B cell (primary cell): ENCODE measurements at regions of chr3 and their contacts with region 1.

Region 1: DNA sequence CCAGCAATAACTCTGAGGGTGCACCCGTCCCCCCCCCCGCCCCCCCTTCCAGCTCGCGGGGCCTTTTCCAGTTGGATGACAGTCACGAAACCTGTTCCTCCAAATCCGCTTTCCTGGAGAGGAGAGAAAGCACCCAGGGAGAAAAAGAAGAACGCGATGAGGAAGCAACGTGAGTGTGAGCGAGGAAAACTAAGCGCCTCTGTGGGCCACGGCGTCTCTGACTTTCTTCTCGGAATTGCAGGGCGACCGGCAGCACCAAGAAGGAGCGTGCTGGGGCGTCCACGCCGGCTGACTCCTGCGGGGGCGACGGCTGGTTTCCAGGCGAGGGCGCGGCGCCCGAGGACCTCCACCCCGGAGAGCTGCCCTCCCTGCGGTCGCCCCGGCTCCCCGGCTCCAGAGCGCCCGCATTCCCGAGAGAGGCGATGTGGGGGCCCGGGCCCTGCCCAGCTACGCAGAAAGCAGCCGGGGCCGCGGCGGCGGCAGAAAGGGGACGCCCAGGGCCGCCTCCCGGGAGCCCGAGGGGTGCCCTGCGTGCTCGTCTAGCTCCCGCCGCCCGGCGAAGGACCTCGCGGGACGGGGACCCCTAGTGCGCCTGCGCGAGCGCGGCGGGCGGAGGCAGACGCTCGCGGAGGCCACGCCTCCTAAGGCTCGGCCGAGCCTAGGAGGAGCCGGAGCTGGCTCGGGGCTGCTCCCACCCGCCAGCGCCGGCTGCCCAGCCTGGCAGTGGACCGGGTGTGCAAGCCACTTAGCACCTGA is 15.4 kb upstream of the ADIPOQ start:
- DNase-seq: peak; percentile 92
- ATAC-seq: peak; percentile 95
- H3K4me3 ChIP-seq: peak overlapping the region in 4 of 5 experiments; percentile 57 to 78 (median 70)
- H3K4me3 Mint-ChIP-seq: peak overlapping the region; percentile 79
- H3K27ac ChIP-seq: peak overlapping the region in 1 of 2 donors; percentile 55
- H3K27ac Mint-ChIP-seq: peak overlapping the region; percentile 41
- H3K4me1 ChIP-seq: peaks cover 24 to 28% of the 10 kb centered on the region in 2 donors
- H3K4me1 Mint-ChIP-seq: peaks cover 21% of the 10 kb centered on the region
- H3K27me3 ChIP-seq: peaks cover 0 to 69% (median 42%) of the 10 kb centered on the region in 4 experiments
- H3K27me3 Mint-ChIP-seq: peaks cover 54% of the 10 kb centered on the region
- CTCF ChIP-seq: no peak

Region 2: DNA sequence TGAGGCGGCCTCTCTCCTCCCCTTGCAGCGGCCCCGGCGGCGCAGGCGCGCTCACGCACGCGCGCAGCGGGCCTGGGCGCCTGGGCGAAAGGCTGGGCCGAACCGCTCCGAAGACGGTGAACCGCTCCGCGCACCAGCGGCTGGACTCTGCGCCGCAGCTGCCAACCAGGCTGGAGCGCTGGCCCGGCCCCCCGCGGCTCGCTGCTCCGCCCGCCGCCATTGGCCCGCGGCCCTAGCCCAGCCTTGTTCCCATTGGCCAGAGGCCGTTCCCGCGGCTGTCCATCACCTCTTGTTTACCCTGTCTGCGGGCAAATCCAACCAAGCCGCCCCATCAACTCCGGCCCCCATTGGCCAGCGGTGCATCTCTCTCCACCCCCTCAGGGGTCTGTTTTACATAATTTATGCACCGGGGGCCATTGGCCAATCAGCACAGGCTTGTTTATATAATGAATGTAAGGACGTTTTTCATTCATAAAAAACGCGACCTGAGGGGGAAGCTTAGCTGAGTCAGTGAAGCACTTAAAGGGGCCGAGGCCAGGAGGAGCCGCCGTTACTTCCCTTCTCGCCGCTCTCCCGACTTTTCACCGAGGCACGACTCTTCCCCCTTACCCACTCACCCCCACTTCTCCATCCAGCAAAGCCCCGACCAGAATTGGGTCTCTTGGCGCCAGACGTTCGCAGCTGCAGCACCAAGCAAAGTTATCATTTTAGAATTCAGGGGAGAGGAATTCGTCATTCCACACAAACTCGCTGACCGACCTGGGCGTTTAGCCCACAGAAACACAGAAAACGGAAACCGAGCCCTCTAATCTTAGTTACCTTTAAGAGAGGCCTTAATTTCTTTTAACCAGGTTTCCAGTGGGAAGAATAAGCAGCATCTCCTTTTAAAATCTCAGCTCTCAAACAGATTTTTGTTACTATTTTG is 718.0 kb before region 1 on chr3 and contains the start of gene ETV5:
- CTCF ChIA-PET with region 1: no interaction called
- POLR2A ChIA-PET with region 1: no interaction called
- intact Hi-C with region 1: loop called (anchors 10 kb)
- DNase-seq: peak; percentile 95
- ATAC-seq: peak; percentile 93
- H3K4me3 ChIP-seq: peak within 1 kb of the TSS; percentile 51 to 73 (median 63)
- H3K4me3 Mint-ChIP-seq: peak within 1 kb of the TSS; percentile 96
- H3K27ac ChIP-seq: no peak within 1 kb of the TSS
- H3K27ac Mint-ChIP-seq: peak within 1 kb of the TSS; percentile 71
- H3K4me1 ChIP-seq: peaks cover 32 to 41% of the 10 kb centered on the region in 2 donors
- H3K4me1 Mint-ChIP-seq: peaks cover 38% of the 10 kb centered on the region
- H3K27me3 ChIP-seq: peaks cover 2 to 79% (median 41%) of the 10 kb centered on the region in 4 experiments
- H3K27me3 Mint-ChIP-seq: peaks cover 51% of the 10 kb centered on the region
- CTCF ChIP-seq: no peak
- total RNA-seq, gene ETV5: 0.10 and 0.74 TPM in 2 replicates

Region 3: DNA sequence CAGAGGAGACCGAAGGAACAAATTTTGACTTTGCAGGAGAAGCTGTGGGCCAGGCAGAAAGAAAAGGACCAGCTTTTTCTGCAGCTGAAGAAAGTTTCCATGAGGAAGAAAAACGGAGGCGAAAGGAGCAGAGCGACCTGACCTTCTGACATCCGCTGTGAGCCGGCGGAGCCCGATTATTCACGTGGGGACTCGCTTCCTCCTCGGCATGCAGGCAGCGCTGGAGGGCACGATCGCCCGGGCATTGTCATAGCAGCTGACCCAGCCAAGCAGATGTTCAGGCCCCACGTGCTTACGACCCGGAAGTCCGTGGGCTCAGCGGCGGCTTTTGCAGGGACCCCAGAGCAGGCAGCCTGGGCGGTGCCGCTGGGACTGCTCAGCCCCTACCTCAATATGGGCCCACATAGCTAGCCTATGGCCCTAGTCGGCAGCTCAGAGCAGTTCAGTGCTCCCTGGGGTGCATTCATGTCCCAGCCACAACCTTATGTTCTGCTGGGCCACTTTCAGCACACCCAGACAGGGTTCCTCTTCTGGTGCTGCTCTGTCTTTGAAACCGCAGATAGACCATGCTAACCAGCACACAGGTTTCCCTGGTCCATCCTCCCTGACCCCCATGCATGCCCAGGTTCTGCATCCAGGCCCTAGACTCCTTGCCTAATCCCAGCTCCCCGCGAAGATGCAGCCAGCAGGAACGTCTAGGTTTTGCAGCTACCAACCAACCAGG is 54.3 kb before region 1 on chr3:
- CTCF ChIA-PET with region 1: no interaction called
- POLR2A ChIA-PET with region 1: no interaction called
- intact Hi-C with region 1: loop called (anchors 1 kb)
- DNase-seq: peak; percentile 87
- ATAC-seq: peak; percentile 93
- H3K4me3 ChIP-seq: peak overlapping the region; percentile 50 to 98 (median 79)
- H3K4me3 Mint-ChIP-seq: peak overlapping the region; percentile 93
- H3K27ac ChIP-seq: peak overlapping the region; percentile 69 to 87
- H3K27ac Mint-ChIP-seq: peak overlapping the region; percentile 91
- H3K4me1 ChIP-seq: peaks cover 11 to 12% of the 10 kb centered on the region in 2 donors
- H3K4me1 Mint-ChIP-seq: peaks cover 17% of the 10 kb centered on the region
- H3K27me3 ChIP-seq: no peaks in the 10 kb centered on the region
- H3K27me3 Mint-ChIP-seq: no peaks in the 10 kb centered on the region
- CTCF ChIP-seq: no peak

Region 4: DNA sequence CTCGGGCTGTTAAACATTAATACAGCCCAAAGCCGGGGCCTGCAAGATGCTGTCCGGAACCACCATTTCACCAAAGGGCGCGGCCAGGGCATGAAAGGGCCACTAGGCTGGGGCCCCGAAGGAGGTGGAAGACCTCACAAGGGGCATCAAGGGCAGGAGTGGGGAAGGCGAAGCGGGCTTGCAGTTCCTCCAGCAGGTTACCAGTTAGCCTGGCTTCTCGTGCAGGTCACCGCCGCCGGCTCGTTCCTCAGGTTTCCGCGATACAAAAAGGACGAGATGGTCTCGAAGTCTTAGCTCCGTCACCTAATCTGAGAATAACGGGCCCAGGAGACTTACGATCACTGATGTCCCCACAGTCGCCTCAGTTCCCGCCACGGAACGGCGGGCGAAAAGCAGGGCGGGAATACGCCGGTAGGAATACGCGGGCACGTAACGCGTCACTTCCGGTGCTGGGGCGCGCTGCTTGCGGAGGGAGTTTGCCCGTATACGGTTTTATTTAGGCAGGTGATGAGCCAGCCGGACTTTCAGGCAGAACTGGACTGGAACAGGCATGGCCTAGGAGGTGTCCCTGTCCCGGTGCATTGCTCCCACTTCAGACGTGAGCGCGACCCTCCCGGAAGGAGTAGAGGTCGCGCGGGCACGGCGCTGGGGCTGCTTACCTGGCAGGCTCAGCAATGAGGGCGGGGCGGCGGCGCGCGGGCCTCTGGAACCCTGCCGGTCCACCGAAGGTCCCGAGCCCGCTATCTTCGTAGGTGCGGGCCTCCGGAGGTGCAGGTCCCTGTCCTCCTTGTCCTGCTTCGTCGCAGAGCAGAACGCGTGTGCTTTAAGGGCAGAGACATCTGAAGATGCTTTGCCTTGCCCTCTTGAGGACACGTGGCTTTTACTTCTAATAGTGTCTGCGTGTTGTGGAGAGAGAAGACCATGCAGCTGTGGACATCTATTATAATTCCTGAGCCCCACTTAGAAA is 20.8 kb before region 1 on chr3 and contains the start of gene RFC4:
- CTCF ChIA-PET with region 1: interaction called, 25 read pairs
- POLR2A ChIA-PET with region 1: no interaction called
- intact Hi-C with region 1: loop called (anchors 1 kb)
- DNase-seq: peak; percentile 88
- ATAC-seq: peak; percentile 91
- H3K4me3 ChIP-seq: peak within 1 kb of the TSS; percentile 78 to 96 (median 90)
- H3K4me3 Mint-ChIP-seq: peak within 1 kb of the TSS; percentile 99
- H3K27ac ChIP-seq: peak within 1 kb of the TSS; percentile 78 to 86
- H3K27ac Mint-ChIP-seq: peak within 1 kb of the TSS; percentile 97
- H3K4me1 ChIP-seq: peaks cover 15 to 19% of the 10 kb centered on the region in 2 donors
- H3K4me1 Mint-ChIP-seq: peaks cover 20% of the 10 kb centered on the region
- H3K27me3 ChIP-seq: no peaks in the 10 kb centered on the region
- H3K27me3 Mint-ChIP-seq: no peaks in the 10 kb centered on the region
- CTCF ChIP-seq: no peak
- total RNA-seq, gene RFC4: 17.8 and 21.0 TPM in 2 replicates

Region 5: DNA sequence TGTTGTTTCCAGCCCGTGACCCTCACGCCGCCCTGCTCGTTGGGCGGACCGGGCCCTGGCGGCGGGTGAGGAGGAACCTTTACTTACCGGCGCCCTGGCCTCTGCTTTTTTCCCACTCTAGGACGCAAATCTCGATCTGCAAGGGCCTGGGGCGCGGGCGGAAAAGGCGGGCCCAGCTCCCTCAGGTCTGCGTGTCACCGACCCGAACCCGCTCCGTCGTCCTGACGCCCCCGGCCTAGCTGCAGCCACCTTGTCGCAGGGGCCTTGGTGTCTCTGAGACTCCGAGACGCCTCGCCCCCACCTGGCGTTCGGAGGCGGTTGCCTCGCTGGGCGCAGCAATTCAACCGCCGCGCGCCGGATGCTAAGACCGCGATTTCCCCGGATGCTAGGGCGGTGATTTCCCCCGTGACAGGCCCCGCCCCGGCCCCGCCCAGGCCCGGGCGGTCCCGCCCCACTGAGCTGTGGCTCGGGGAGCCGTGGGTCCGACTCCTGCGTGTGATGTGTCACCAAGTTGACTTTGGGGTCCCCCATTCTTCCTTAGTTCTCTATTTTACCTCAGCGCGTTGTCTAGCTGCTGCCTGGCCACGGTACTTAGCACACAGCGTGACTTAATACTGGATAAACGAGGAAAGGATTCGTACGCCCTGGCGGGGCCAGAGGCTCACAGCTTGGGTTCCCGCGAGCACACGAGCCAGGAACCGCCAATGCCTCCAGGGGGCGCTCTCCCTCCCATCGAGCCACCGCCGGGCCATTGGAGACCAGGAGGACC is 312.2 kb after region 1 on chr3 and contains the start of gene RPL39L:
- CTCF ChIA-PET with region 1: interaction called, 3 read pairs
- POLR2A ChIA-PET with region 1: interaction called, 3 read pairs
- intact Hi-C with region 1: loop called (anchors 1 kb)
- DNase-seq: peak; percentile 95
- ATAC-seq: peak; percentile 95
- H3K4me3 ChIP-seq: peak within 1 kb of the TSS in 4 of 5 experiments; percentile 49 to 68 (median 58)
- H3K4me3 Mint-ChIP-seq: peak within 1 kb of the TSS; percentile 90
- H3K27ac ChIP-seq: peak within 1 kb of the TSS; percentile 77 to 79
- H3K27ac Mint-ChIP-seq: peak within 1 kb of the TSS; percentile 90
- H3K4me1 ChIP-seq: peaks cover 12 to 14% of the 10 kb centered on the region in 2 donors
- H3K4me1 Mint-ChIP-seq: peaks cover 16% of the 10 kb centered on the region
- H3K27me3 ChIP-seq: no peaks in the 10 kb centered on the region
- H3K27me3 Mint-ChIP-seq: no peaks in the 10 kb centered on the region
- CTCF ChIP-seq: peak; percentile 79
- total RNA-seq, gene RPL39L: 2.0 and 3.1 TPM in 2 replicates